ENCODE measurements at regions of chr18 and their contacts with region 1.

Region 1: GRCh38 chr18:45212181-45213039 is 402.9 kb upstream of the SLC14A2 start:
- DNase-seq: peak; percentile 76 to 86 (median 81)
- ATAC-seq: peak; percentile 81 to 98 (median 97)
- H3K4me3 ChIP-seq: no peak overlapping the region
- H3K27ac ChIP-seq: no peak overlapping the region
- H3K4me1 ChIP-seq: no peaks in the 10 kb centered on the region
- H3K27me3 ChIP-seq: peaks cover 0 to 3% (median 0%) of the 10 kb centered on the region in 9 donors
- CTCF ChIP-seq: peak; percentile 84 to 99 (median 92)
- POLR2A ChIP-seq: no peak

Region 2: DNA sequence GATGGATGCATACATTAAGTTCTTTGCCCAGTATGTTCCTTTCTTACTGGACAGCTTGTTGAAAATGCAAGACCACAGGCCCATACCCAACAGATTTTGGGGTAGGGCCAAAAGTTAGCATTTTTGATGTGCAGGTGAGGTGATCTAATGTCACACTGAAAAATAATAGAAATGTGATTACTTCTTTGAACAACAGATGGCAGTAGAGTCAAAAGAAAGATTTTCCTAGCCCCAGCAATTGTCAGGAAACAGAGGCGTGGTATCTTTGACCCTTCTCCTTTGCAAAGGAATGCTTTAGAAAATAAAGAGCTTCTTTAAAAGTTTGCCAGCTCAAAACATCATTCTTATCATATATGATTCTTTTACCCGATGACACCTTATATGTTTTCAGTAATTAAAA is 1591.5 kb before region 1 on chr18:
- intact Hi-C with region 1: loop called in 4 of 10 experiments (anchors 5 to 10 kb)
- DNase-seq: no peak
- ATAC-seq: peak in 2 of 4 donors; percentile 46 to 57
- H3K4me3 ChIP-seq: no peak overlapping the region
- H3K27ac ChIP-seq: no peak overlapping the region
- H3K4me1 ChIP-seq: no peaks in the 10 kb centered on the region
- H3K27me3 ChIP-seq: no peaks in the 10 kb centered on the region
- CTCF ChIP-seq: peak; percentile 41 to 71 (median 54)
- POLR2A ChIP-seq: no peak

Region 3: GRCh38 chr18:44130376-44130942 is 1082.0 kb before region 1 on chr18:
- intact Hi-C with region 1: loop called in 3 of 10 experiments (anchors 5 to 10 kb)
- DNase-seq: no peak
- ATAC-seq: peak in 1 of 4 donors; percentile 51
- H3K4me3 ChIP-seq: no peak overlapping the region
- H3K27ac ChIP-seq: no peak overlapping the region
- H3K4me1 ChIP-seq: no peaks in the 10 kb centered on the region
- H3K27me3 ChIP-seq: no peaks in the 10 kb centered on the region
- CTCF ChIP-seq: peak; percentile 38 to 77 (median 60)
- POLR2A ChIP-seq: no peak

Region 4: DNA sequence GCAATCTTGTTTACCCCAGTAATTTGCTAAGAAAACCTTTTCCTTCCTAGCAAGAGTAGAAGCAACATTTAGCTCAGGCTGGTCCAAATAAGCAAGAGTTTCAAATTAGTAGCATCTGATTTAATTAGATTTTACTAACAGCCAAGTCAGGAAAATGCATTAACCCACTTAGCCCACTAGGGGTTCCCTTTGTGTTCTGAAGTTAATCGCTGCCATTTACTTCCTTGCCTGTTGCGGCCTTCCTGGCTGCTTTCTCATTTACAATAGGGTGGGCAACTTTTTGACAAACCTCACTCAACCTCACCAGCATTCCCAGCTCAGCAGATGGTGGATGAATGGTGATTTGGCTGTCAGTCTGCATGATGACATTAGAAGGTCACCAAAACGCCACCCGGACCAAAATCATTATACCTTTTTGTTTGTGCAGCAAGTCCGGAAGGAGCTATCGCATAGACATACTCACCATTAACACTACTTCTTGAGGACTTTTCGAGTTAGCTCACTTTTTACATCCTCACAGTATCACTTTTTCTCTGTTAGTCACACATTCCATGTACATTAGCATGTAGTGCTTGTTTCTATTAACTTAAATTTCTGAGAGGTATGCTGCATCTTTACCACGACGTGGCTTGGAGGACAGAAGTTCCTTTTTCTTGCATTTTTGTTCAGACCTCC is 633.2 kb before region 1 on chr18:
- intact Hi-C with region 1: loop called in 1 of 10 experiments (anchors 10 kb)
- DNase-seq: no peak
- ATAC-seq: no peak
- H3K4me3 ChIP-seq: no peak overlapping the region
- H3K27ac ChIP-seq: no peak overlapping the region
- H3K4me1 ChIP-seq: peaks cover 0 to 3% (median 0%) of the 10 kb centered on the region in 12 donors
- H3K27me3 ChIP-seq: no peaks in the 10 kb centered on the region
- CTCF ChIP-seq: peak; percentile 33 to 67 (median 50)
- POLR2A ChIP-seq: no peak

Region 5: DNA sequence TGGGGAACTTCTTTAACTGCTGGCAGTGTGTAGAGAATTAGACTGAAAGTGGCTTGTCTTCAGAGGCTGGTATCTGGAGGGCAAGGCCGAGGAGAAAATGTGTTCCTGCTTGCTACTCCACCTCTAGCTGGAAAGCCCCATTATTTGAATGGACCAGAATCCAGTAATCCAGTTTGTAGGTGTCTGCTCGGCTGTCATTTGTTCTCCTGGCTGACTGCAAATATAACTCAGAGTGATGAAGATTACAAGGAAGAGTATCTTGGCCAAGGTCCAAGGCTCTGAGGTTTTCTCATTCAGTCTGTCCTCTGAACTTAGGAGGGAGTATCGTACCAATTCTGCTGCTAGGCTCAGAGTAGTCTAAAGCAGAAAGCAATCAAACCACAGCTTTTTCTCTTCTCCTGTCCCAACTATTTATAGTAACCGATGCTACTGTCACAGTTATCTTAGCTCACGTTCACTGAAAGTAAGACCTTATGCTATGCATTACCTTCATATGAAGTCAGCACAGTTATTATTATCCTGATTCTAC is 303.2 kb before region 1 on chr18:
- intact Hi-C with region 1: loop called in 4 of 10 experiments (anchors 10 kb)
- DNase-seq: peak in 1 of 5 donors; percentile 27
- ATAC-seq: peak in 1 of 4 donors; percentile 34
- H3K4me3 ChIP-seq: no peak overlapping the region
- H3K27ac ChIP-seq: no peak overlapping the region
- H3K4me1 ChIP-seq: peaks cover 0 to 11% (median 0%) of the 10 kb centered on the region in 12 donors
- H3K27me3 ChIP-seq: no peaks in the 10 kb centered on the region
- CTCF ChIP-seq: no peak
- POLR2A ChIP-seq: no peak

Region 6: DNA sequence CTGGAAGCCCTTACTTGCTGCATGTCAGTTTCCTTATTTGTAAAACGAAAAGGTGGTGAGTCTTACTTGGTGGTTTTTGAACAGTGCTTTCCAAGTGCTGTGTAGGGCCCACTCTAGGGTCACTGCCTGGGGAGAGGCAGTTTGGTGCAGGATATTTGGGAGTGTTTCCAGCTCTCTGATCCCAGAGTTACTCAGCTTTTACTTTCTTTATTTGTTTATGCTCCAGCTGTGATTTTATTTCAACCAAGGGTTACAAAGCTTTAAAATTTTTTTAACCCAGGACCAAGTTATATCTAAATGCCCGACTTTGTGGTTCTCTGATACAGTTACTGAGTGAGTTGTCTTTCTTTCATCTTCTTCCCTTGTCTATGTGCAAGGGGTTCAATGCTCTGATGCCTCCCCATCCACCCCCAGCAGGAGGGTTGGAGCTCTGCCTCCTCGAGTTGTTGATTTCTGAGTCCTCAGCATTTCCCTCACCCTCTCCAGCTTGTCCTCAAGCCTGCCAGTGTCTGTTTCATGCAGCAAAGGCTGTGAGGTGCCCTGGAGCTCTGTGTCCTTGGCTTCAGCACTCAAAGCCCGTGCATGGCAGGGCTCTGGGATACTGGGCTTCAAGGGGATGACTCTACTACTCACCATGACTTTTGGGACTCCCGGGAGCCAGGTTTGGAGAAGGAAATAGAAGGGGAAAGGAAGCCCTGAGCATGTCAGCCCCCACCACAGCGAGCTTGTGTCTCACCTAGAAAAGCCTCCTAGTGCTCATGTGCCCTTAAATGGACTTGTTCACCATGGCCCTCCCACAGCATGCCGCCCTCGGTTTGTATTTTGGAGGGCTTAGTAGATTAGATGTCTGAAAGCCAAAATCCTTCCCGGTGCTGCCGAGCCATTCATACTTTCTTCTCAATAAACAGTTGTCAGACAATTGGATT is 294.9 kb before region 1 on chr18:
- intact Hi-C with region 1: loop called in 3 of 10 experiments (anchors 10 kb)
- DNase-seq: no peak
- ATAC-seq: peak; percentile 61 to 76 (median 68)
- H3K4me3 ChIP-seq: no peak overlapping the region
- H3K27ac ChIP-seq: peak overlapping the region in 2 of 12 donors; percentile 6 to 52
- H3K4me1 ChIP-seq: peaks cover 0 to 35% (median 15%) of the 10 kb centered on the region in 12 donors
- H3K27me3 ChIP-seq: no peaks in the 10 kb centered on the region
- CTCF ChIP-seq: no peak
- POLR2A ChIP-seq: no peak

Region 7: GRCh38 chr18:45156946-45157345 is 55.5 kb before region 1 on chr18:
- intact Hi-C with region 1: no loop called
- DNase-seq: no peak
- ATAC-seq: no peak
- H3K4me3 ChIP-seq: no peak overlapping the region
- H3K27ac ChIP-seq: no peak overlapping the region
- H3K4me1 ChIP-seq: peaks cover 0 to 7% (median 0%) of the 10 kb centered on the region in 12 donors
- H3K27me3 ChIP-seq: no peaks in the 10 kb centered on the region
- CTCF ChIP-seq: no peak
- POLR2A ChIP-seq: no peak

Region 8: GRCh38 chr18:45197526-45197970 is 14.9 kb before region 1 on chr18:
- intact Hi-C with region 1: no loop called
- DNase-seq: no peak
- ATAC-seq: no peak
- H3K4me3 ChIP-seq: no peak overlapping the region
- H3K27ac ChIP-seq: no peak overlapping the region
- H3K4me1 ChIP-seq: no peaks in the 10 kb centered on the region
- H3K27me3 ChIP-seq: peaks cover 0 to 2% (median 0%) of the 10 kb centered on the region in 9 donors
- CTCF ChIP-seq: no peak
- POLR2A ChIP-seq: no peak

Measured in heart left ventricle (tissue), 16 donors.